Activated B cell treated with CpG ODN at 0.5 μM for 24 hours (primary cell): ENCODE measurements at regions of chr3 and their contacts with region 1.

Region 1: GRCh38 chr3:40476478-40477470 is at the start of gene ZNF619:
- DNase-seq: peak; percentile 64
- ATAC-seq: peak; percentile 97
- H3K4me3 Mint-ChIP-seq: peak within 1 kb of the TSS; percentile 93
- H3K27ac Mint-ChIP-seq: peak within 1 kb of the TSS; percentile 94
- H3K4me1 Mint-ChIP-seq: peaks cover 27% of the 10 kb centered on the region
- H3K27me3 Mint-ChIP-seq: no peaks in the 10 kb centered on the region
- CTCF ChIP-seq: no peak
- total RNA-seq, gene ZNF619: 14.9 and 16.7 TPM in 2 replicates

Region 2: GRCh38 chr3:40452876-40453730 is 23.7 kb before region 1 on chr3:
- CTCF ChIA-PET with region 1: no interaction called
- POLR2A ChIA-PET with region 1: interaction called, 38 read pairs
- intact Hi-C with region 1: loop called (anchors 1 kb)
- DNase-seq: peak; percentile 81
- ATAC-seq: peak; percentile 92
- H3K4me3 Mint-ChIP-seq: peak overlapping the region; percentile 96
- H3K27ac Mint-ChIP-seq: peak overlapping the region; percentile 98
- H3K4me1 Mint-ChIP-seq: peaks cover 36% of the 10 kb centered on the region
- H3K27me3 Mint-ChIP-seq: no peaks in the 10 kb centered on the region
- CTCF ChIP-seq: no peak

Region 3: DNA sequence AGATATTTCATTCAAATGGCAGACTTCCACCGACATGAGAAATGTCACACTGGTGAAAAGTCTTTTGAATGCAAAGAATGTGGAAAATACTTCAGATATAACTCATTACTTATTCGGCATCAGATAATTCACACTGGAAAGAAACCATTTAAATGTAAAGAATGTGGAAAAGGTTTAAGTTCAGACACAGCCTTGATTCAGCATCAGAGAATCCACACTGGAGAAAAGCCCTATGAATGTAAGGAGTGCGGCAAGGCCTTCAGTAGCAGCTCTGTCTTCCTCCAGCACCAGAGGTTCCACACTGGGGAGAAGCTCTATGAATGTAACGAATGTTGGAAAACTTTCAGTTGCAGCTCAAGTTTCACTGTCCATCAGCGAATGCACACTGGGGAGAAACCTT is 39.4 kb after region 1 on chr3:
- CTCF ChIA-PET with region 1: no interaction called
- POLR2A ChIA-PET with region 1: no interaction called
- intact Hi-C with region 1: no loop called
- DNase-seq: no peak
- ATAC-seq: no peak
- H3K4me3 Mint-ChIP-seq: no peak overlapping the region
- H3K27ac Mint-ChIP-seq: no peak overlapping the region
- H3K4me1 Mint-ChIP-seq: no peaks in the 10 kb centered on the region
- H3K27me3 Mint-ChIP-seq: no peaks in the 10 kb centered on the region
- CTCF ChIP-seq: no peak

Region 4: DNA sequence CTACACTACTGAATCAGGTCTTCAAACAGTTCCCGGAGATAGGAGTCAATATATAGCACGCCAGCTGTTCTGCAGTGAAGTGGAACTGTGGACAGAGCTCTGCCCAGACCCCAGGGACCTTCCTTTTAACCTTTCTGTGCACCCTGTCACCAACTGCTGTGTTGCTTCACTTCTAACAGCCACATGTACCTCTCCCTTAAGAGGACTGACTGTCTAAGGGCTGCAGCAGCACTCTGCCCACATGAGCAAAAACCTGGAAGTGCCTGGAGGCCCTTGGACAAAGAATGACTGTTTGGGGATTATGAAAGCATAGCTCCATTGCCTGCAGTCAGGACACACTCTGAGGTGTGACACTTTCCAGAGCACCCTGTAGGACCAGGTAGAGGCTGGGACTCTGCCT is 634.2 kb after region 1 on chr3:
- CTCF ChIA-PET with region 1: no interaction called
- POLR2A ChIA-PET with region 1: no interaction called
- intact Hi-C with region 1: no loop called
- DNase-seq: no peak
- ATAC-seq: no peak
- H3K4me3 Mint-ChIP-seq: no peak overlapping the region
- H3K27ac Mint-ChIP-seq: no peak overlapping the region
- H3K4me1 Mint-ChIP-seq: peaks cover 11% of the 10 kb centered on the region
- H3K27me3 Mint-ChIP-seq: peaks cover 4% of the 10 kb centered on the region
- CTCF ChIP-seq: no peak